Activated naive CD4-positive, alpha-beta T cell treated with anti-CD3 and anti-CD28 coated beads for 36 hours (primary cell): ENCODE measurements at regions of chr1 and their contacts with region 1.

Region 1: GRCh38 chr1:236534151-236534651 is 10.4 kb downstream of the LGALS8 start:
- DNase-seq: peak; percentile 64
- H3K4me3 Mint-ChIP-seq: no peak overlapping the region
- H3K27ac Mint-ChIP-seq: peak overlapping the region; percentile 86
- H3K4me1 Mint-ChIP-seq: peaks cover 41% of the 10 kb centered on the region
- H3K27me3 Mint-ChIP-seq: no peaks in the 10 kb centered on the region

Region 2: GRCh38 chr1:236523701-236524141 is 10.5 kb before region 1 on chr1 and contains the start of gene LGALS8:
- CTCF ChIA-PET with region 1: interaction called, 5 read pairs
- intact Hi-C with region 1: loop called (anchors 1 kb)
- DNase-seq: peak; percentile 91
- H3K4me3 Mint-ChIP-seq: peak within 1 kb of the TSS; percentile 96
- H3K27ac Mint-ChIP-seq: peak within 1 kb of the TSS; percentile 97
- H3K4me1 Mint-ChIP-seq: peaks cover 9% of the 10 kb centered on the region
- H3K27me3 Mint-ChIP-seq: no peaks in the 10 kb centered on the region
- total RNA-seq, gene LGALS8: 78.6 to 89.4 TPM

Region 3: DNA sequence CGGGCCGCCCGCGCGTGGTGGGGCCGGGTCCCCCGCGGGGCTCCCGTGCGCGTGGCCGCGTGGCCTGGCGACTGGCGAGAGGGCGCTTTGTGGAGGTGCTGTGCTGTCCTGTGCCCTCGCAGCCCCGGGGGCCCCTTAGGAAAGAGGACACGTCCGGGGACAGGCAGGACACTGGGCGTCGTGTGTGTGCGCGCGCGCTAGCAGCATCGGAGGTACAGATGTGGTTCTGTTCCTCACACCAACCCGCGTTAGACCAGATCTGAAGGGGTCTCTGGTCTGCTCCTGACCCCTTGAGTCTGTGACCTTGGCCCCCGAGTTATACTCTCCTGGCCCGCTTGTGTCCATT is 152.6 kb after region 1 on chr1:
- CTCF ChIA-PET with region 1: no interaction called
- intact Hi-C with region 1: no loop called
- DNase-seq: no peak
- H3K4me3 Mint-ChIP-seq: peak overlapping the region; percentile 53
- H3K27ac Mint-ChIP-seq: no peak overlapping the region
- H3K4me1 Mint-ChIP-seq: peaks cover 18% of the 10 kb centered on the region
- H3K27me3 Mint-ChIP-seq: peaks cover 43% of the 10 kb centered on the region